Left cardiac atrium (tissue), 4 donors: ENCODE measurements at regions of chr5 and their contacts with region 1.

Region 1: GRCh38 chr5:59673438-59674058 is 220.0 kb downstream of the PDE4D start:
- DNase-seq: no peak
- ATAC-seq: peak in 1 of 2 donors; percentile 33

Region 2: DNA sequence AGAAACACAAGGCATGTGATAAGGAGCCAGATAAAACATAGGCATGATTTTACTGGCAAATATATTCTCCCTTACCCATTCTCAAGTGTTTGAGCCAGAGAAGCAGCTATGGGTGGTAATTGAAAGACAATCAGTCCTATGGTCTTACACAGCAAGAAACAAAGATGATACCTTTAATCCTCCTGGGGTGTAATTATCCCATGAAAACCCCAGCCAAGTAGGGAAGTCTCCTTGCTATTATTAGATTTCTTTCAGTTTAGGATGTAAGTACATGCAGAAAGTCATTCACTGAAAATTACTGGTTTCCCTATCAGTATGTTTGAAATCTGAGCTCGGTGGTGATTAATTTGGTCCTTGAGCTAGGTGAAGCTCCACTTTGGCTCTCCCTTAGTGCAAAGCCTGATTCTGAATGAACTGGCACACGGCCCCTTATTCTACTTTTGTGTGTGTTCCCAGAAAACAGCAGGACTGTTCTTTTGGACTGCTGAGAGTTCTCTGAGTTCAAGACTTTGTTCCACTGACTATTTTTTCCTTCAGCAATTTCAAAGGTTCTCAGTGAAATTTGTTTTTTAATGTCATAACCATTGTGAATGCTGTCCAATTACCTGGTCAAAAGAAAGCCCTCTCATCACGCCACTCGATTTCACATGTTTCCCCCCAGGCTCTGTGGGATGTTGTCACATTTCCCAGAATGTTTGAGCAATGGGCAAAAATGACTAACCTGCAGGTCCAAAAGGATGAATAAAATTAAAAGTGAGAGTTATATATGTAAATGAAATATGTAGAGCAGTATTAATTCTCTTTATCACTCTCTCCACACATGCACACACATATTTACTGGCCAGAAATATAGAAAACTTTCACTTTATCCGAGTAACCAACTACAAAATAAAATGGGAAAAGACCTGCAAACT is 747.7 kb before region 1 on chr5:
- intact Hi-C with region 1: no loop called
- DNase-seq: no peak
- ATAC-seq: no peak

Region 3: GRCh38 chr5:59390074-59390659 is 283.4 kb before region 1 on chr5:
- intact Hi-C with region 1: loop called (anchors 2 to 5 kb)
- DNase-seq: no peak
- ATAC-seq: no peak

Region 4: GRCh38 chr5:59506285-59506877 is 167.2 kb before region 1 on chr5:
- intact Hi-C with region 1: loop called (anchors 5 kb)
- DNase-seq: no peak
- ATAC-seq: no peak